Lower leg skin (tissue), 4 donors: ENCODE measurements at regions of chr19 and their contacts with region 1.

Region 1: GRCh38 chr19:1275260-1275975 is at the start of gene FAM174C:
- DNase-seq: peak; percentile 93 to 99
- H3K4me3 ChIP-seq: peak within 1 kb of the TSS; percentile 47
- CTCF ChIP-seq: no peak
- POLR2A ChIP-seq: no peak
- total RNA-seq, gene FAM174C: 66.3 to 74.1 (median 68.8) TPM

Region 2: DNA sequence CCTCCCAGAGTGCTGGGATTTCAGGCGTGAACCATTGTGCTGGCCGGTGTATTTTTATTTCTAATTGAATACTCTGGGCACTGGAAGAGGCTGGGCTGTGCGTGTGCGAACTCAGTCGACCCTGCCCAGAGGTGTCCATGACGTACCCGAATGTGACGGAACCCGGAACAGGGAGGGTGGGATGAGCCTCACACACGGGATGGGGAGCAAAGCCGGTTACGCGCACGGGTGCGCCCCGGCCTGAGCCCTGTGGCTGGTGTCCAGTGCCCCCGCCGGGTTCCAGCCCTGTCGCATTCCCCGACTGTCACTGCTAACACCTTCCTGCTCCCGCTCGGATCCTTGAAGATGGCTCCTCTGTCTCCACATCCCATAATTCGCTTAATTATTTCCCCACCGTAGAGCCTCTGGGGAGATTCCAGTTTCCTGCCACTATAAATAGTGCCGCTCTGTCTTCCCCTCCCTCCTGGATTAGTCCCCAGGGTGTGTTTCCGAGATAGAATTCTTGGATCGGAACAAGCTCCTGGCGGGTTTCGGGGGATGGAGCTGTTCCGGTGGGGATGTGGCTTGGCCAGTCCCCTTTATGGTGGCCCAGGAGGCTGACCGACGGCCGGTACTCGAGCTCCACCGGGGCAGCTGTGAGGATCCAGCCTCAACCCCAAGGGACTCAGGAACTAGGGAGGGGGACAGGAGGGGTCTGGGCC is 123.4 kb before region 1 on chr19:
- intact Hi-C with region 1: no loop called
- DNase-seq: no peak
- H3K4me3 ChIP-seq: no peak overlapping the region
- CTCF ChIP-seq: no peak
- POLR2A ChIP-seq: no peak

Region 3: GRCh38 chr19:1315470-1316231 is 40.2 kb after region 1 on chr19:
- intact Hi-C with region 1: no loop called
- DNase-seq: no peak
- H3K4me3 ChIP-seq: no peak overlapping the region
- CTCF ChIP-seq: no peak
- POLR2A ChIP-seq: no peak

Region 4: GRCh38 chr19:1355568-1356507 is 80.4 kb after region 1 on chr19:
- intact Hi-C with region 1: loop called (anchors 10 kb)
- DNase-seq: no peak
- H3K4me3 ChIP-seq: peak overlapping the region; percentile 66
- CTCF ChIP-seq: no peak
- POLR2A ChIP-seq: no peak

Region 5: DNA sequence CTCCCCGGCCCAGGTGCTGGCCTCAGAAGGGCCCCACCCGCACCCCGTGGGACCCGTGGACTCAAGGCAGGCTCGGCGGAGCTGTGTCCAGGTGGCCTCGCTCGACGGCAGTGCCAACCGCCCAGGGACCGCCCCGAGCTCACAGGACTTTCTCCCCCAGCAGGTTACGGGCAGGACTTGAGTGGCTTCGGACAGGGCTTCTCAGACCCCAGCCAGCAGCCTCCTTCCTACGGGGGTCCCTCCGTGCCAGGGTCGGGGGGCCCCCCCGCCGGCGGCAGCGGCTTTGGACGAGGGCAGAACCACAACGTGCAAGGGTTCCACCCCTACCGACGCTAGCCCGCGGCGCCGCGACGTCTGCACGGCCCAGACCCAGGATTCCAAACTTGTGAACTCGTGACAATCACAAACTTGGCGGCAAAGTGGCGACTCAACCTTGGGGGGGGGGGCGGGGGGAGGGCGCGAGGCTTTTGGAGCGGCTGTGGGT is 159.2 kb after region 1 on chr19:
- intact Hi-C with region 1: no loop called
- DNase-seq: no peak
- H3K4me3 ChIP-seq: no peak overlapping the region
- CTCF ChIP-seq: no peak
- POLR2A ChIP-seq: no peak

Region 6: GRCh38 chr19:1445185-1445931 is 169.9 kb after region 1 on chr19:
- intact Hi-C with region 1: loop called (anchors 5 kb)
- DNase-seq: peak in 1 of 2 donors; percentile 94
- H3K4me3 ChIP-seq: no peak overlapping the region
- CTCF ChIP-seq: no peak
- POLR2A ChIP-seq: no peak

Region 7: GRCh38 chr19:2438178-2438864 is 1162.9 kb after region 1 on chr19:
- intact Hi-C with region 1: no loop called
- DNase-seq: no peak
- H3K4me3 ChIP-seq: no peak overlapping the region
- CTCF ChIP-seq: no peak
- POLR2A ChIP-seq: no peak